Activated CD4-positive, alpha-beta memory T cell treated with anti-CD3 and anti-CD28 coated beads for 36 hours (primary cell): ENCODE measurements at regions of chr7 and their contacts with region 1.

Region 1: GRCh38 chr7:48109848-48110663 is 21.0 kb downstream of the UPP1 start:
- DNase-seq: peak; percentile 93
- H3K4me3 Mint-ChIP-seq: no peak overlapping the region
- H3K27ac Mint-ChIP-seq: peak overlapping the region; percentile 34
- H3K4me1 Mint-ChIP-seq: peaks cover 11% of the 10 kb centered on the region
- H3K27me3 Mint-ChIP-seq: no peaks in the 10 kb centered on the region

Region 2: GRCh38 chr7:47513741-47514241 is 596.3 kb before region 1 on chr7:
- CTCF ChIA-PET with region 1: no interaction called
- POLR2A ChIA-PET with region 1: no interaction called
- intact Hi-C with region 1: no loop called
- DNase-seq: no peak
- H3K4me3 Mint-ChIP-seq: no peak overlapping the region
- H3K27ac Mint-ChIP-seq: no peak overlapping the region
- H3K4me1 Mint-ChIP-seq: no peaks in the 10 kb centered on the region
- H3K27me3 Mint-ChIP-seq: no peaks in the 10 kb centered on the region

Region 3: DNA sequence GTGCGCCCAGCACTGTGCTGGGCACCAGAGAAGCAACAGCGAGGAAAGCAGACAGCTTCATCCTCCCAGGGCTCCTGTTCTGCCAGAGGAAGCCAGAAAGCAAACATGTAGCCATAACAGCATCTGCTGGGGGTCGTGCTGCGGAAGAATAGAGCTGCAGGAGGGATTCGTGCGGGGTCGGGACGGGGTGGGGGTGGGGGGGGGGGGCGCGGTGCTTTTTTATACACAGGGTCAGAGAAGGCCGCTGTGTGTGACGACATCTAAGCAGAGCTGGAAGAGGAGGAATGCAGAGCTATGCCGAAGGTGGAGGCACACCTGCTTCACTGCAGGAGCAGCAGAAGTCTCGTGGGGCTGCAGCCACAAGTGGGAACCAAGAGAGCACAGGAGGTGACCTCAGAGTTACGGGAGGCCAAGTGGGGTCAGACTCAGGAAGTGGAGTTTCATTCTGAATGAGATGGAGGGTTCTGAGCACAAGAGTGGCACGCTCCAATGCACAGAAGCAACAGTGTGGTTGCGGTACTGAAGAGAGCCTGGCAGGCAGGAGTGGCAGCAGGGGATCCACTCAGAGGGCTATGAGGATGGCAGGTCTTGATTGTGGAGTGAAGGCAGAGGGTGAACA is 172.9 kb before region 1 on chr7:
- CTCF ChIA-PET with region 1: interaction called, 11 read pairs
- POLR2A ChIA-PET with region 1: no interaction called
- intact Hi-C with region 1: no loop called
- DNase-seq: peak; percentile 78
- H3K4me3 Mint-ChIP-seq: peak overlapping the region; percentile 1
- H3K27ac Mint-ChIP-seq: peak overlapping the region; percentile 75
- H3K4me1 Mint-ChIP-seq: peaks cover 19% of the 10 kb centered on the region
- H3K27me3 Mint-ChIP-seq: no peaks in the 10 kb centered on the region

Region 4: GRCh38 chr7:47945261-47946001 is 164.6 kb before region 1 on chr7:
- CTCF ChIA-PET with region 1: interaction called, 86 read pairs
- POLR2A ChIA-PET with region 1: interaction called, 9 read pairs
- intact Hi-C with region 1: loop called (anchors 1 kb)
- DNase-seq: peak; percentile 81
- H3K4me3 Mint-ChIP-seq: no peak overlapping the region
- H3K27ac Mint-ChIP-seq: no peak overlapping the region
- H3K4me1 Mint-ChIP-seq: no peaks in the 10 kb centered on the region
- H3K27me3 Mint-ChIP-seq: no peaks in the 10 kb centered on the region

Region 5: GRCh38 chr7:47968847-47969774 is 140.9 kb before region 1 on chr7:
- CTCF ChIA-PET with region 1: interaction called, 20 read pairs
- POLR2A ChIA-PET with region 1: no interaction called
- intact Hi-C with region 1: no loop called
- DNase-seq: peak; percentile 63
- H3K4me3 Mint-ChIP-seq: no peak overlapping the region
- H3K27ac Mint-ChIP-seq: peak overlapping the region; percentile 34
- H3K4me1 Mint-ChIP-seq: peaks cover 30% of the 10 kb centered on the region
- H3K27me3 Mint-ChIP-seq: no peaks in the 10 kb centered on the region

Region 6: DNA sequence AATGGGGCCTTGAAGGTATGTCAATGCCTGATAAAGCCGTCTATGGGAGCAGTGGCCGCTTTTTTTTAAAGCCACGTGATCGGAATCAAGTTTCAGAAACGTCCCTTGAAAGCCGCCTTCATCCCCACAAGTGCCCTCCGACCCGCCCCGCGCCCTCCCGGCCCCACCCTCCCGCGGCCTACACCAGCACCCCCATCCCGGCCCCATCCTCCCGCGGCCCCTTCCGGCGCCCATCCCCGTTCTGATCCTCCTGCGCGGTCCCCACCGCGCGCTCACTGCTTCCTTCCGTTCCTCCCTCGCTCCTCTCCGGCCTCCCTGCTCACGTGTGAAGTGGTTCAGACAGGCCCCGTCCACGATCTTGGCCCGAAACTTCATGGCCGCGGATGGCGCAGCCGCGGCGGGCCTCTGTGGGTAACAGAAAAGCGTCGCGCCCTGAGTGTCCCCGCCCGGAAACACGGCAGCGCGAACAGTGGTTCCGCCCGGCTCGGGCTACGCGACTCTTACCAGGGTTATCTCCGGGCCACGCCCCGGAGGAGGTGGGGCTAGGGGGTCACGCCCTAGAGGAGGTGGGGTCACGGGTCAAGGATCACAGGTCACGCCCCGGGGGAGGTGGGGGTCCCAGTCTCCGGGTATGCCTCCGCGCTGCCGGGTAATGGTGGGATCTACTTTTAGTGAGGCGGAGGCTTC is 130.8 kb before region 1 on chr7 and contains the start of gene HUS1:
- CTCF ChIA-PET with region 1: interaction called, 10 read pairs
- POLR2A ChIA-PET with region 1: no interaction called
- intact Hi-C with region 1: loop called (anchors 5 kb)
- DNase-seq: peak; percentile 96
- H3K4me3 Mint-ChIP-seq: peak within 1 kb of the TSS; percentile 84
- H3K27ac Mint-ChIP-seq: peak within 1 kb of the TSS; percentile 91
- H3K4me1 Mint-ChIP-seq: peaks cover 24% of the 10 kb centered on the region
- H3K27me3 Mint-ChIP-seq: no peaks in the 10 kb centered on the region
- total RNA-seq, gene HUS1: 38.6 to 38.9 TPM

Region 7: GRCh38 chr7:47991741-47992311 is 118.2 kb before region 1 on chr7:
- CTCF ChIA-PET with region 1: interaction called, 62 read pairs
- POLR2A ChIA-PET with region 1: interaction called, 8 read pairs
- intact Hi-C with region 1: loop called (anchors 1 kb)
- DNase-seq: peak; percentile 93
- H3K4me3 Mint-ChIP-seq: peak overlapping the region; percentile 87
- H3K27ac Mint-ChIP-seq: peak overlapping the region; percentile 86
- H3K4me1 Mint-ChIP-seq: peaks cover 15% of the 10 kb centered on the region
- H3K27me3 Mint-ChIP-seq: no peaks in the 10 kb centered on the region

Region 8: GRCh38 chr7:48035301-48035966 is 74.6 kb before region 1 on chr7 and contains the start of gene C7orf57:
- CTCF ChIA-PET with region 1: interaction called, 19 read pairs
- POLR2A ChIA-PET with region 1: no interaction called
- intact Hi-C with region 1: loop called (anchors 1 kb)
- DNase-seq: peak; percentile 91
- H3K4me3 Mint-ChIP-seq: peak within 1 kb of the TSS; percentile 78
- H3K27ac Mint-ChIP-seq: no peak within 1 kb of the TSS
- H3K4me1 Mint-ChIP-seq: peaks cover 9% of the 10 kb centered on the region
- H3K27me3 Mint-ChIP-seq: peaks cover 15% of the 10 kb centered on the region
- total RNA-seq, gene C7orf57: 0.71 to 0.90 TPM